ENCODE measurements at regions of chr4 and their contacts with region 1.

Region 1: GRCh38 chr4:103934178-103934789 is 214.5 kb upstream of the TACR3 start:
- DNase-seq: peak in 1 of 2 donors; percentile 14
- ATAC-seq: no peak
- H3K4me3 ChIP-seq: no peak overlapping the region
- H3K27ac ChIP-seq: no peak overlapping the region
- H3K4me1 ChIP-seq: no peaks in the 10 kb centered on the region
- H3K27me3 ChIP-seq: no peaks in the 10 kb centered on the region
- CTCF ChIP-seq: peak; percentile 41 to 83 (median 72)

Region 2: GRCh38 chr4:103204111-103204510 is 730.2 kb before region 1 on chr4:
- intact Hi-C with region 1: loop called in 1 of 10 experiments (anchors 10 kb)
- DNase-seq: no peak
- ATAC-seq: no peak
- H3K4me3 ChIP-seq: no peak overlapping the region
- H3K27ac ChIP-seq: no peak overlapping the region
- H3K4me1 ChIP-seq: no peaks in the 10 kb centered on the region
- H3K27me3 ChIP-seq: peaks cover 0 to 5% (median 0%) of the 10 kb centered on the region in 7 donors
- CTCF ChIP-seq: peak in 1 of 9 donors; percentile 28

Region 3: GRCh38 chr4:103853146-103853545 is 81.1 kb before region 1 on chr4:
- intact Hi-C with region 1: no loop called
- DNase-seq: no peak
- ATAC-seq: no peak
- H3K4me3 ChIP-seq: no peak overlapping the region
- H3K27ac ChIP-seq: no peak overlapping the region
- H3K4me1 ChIP-seq: no peaks in the 10 kb centered on the region
- H3K27me3 ChIP-seq: no peaks in the 10 kb centered on the region
- CTCF ChIP-seq: no peak

Region 4: GRCh38 chr4:103895942-103896360 is 38.3 kb before region 1 on chr4:
- intact Hi-C with region 1: no loop called
- DNase-seq: no peak
- ATAC-seq: no peak
- H3K4me3 ChIP-seq: no peak overlapping the region
- H3K27ac ChIP-seq: no peak overlapping the region
- H3K4me1 ChIP-seq: no peaks in the 10 kb centered on the region
- H3K27me3 ChIP-seq: no peaks in the 10 kb centered on the region
- CTCF ChIP-seq: no peak

Region 5: DNA sequence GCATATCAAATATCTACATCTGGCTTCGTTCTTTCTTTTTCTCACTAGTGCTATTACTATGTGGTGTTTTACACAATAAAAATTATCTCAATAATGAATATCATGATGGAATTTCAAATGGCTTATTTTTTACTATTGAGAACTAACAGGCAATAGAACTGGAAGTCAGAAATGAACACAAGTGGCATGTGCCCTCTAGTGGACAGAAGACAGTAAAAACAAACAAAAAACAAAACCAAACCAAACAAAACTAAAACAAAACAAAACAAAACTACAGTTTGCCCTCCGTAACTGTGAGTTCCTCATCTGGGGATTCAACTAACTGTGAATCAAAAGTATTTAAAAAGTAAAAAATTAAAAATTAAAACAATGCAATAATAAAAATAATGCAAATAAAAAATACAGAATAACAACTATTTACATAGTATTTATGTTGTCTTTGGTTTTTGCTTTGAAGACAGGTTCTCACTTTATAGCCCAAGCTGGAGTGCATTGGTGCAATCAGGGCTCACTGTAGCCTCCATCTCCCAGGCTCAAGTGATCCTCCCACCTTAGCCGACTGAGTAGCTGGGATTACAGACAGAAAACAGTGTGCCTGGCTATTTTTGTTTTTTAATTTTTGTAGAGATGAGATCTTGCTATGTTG is 18.9 kb before region 1 on chr4:
- intact Hi-C with region 1: loop called in 1 of 10 experiments (anchors 1 kb)
- DNase-seq: no peak
- ATAC-seq: no peak
- H3K4me3 ChIP-seq: no peak overlapping the region
- H3K27ac ChIP-seq: no peak overlapping the region
- H3K4me1 ChIP-seq: no peaks in the 10 kb centered on the region
- H3K27me3 ChIP-seq: peaks cover 0 to 3% (median 0%) of the 10 kb centered on the region in 7 donors
- CTCF ChIP-seq: peak in 7 of 9 donors; percentile 38 to 58 (median 46)

Region 6: GRCh38 chr4:104015680-104016253 is 81.5 kb after region 1 on chr4:
- intact Hi-C with region 1: no loop called
- DNase-seq: no peak
- ATAC-seq: no peak
- H3K4me3 ChIP-seq: no peak overlapping the region
- H3K27ac ChIP-seq: no peak overlapping the region
- H3K4me1 ChIP-seq: no peaks in the 10 kb centered on the region
- H3K27me3 ChIP-seq: no peaks in the 10 kb centered on the region
- CTCF ChIP-seq: peak in 6 of 9 donors; percentile 26 to 51 (median 40)

Region 7: DNA sequence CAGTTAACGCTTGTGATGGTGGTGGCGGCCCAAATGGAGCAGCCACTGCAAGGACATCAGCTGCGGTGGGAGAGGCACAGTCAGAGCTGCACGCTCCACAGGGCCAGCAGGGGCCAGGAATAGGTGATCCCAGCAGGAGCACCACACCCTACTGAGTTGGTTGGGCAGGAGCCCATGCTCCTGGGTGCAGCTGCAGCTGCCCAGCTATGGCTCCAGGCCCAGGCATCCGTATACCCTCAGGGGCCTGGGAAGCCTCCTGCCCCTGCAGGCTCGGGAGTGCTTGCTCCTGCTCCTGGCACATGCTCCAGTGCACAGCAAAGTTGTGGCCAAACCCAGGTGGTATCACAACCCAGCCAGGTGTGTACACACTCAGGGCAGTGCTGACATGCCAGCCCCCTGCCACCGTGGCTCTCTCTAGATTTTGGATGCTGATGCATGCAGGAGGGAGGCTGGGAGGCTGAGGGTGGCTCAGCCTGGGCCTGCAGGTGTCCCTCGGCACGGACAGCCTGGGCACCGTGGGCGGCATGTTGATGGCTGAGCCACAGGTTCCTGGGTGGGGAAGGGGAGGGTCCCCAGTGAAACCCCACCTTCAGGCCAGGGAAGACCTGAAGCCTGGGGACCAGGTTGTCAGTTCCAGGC is 410.2 kb after region 1 on chr4:
- intact Hi-C with region 1: no loop called
- DNase-seq: no peak
- ATAC-seq: no peak
- H3K4me3 ChIP-seq: no peak overlapping the region
- H3K27ac ChIP-seq: no peak overlapping the region
- H3K4me1 ChIP-seq: no peaks in the 10 kb centered on the region
- H3K27me3 ChIP-seq: no peaks in the 10 kb centered on the region
- CTCF ChIP-seq: no peak